ENCODE measurements at regions of chr21 and their contacts with region 1.

Region 1: GRCh38 chr21:38819714-38820183 is 14.0 kb downstream of the ETS2 start:
- DNase-seq: peak; percentile 77
- ATAC-seq: peak; percentile 67
- H3K4me3 ChIP-seq: no peak overlapping the region
- H3K27ac ChIP-seq: peak overlapping the region; percentile 22
- H3K4me1 ChIP-seq: peaks cover 32% of the 10 kb centered on the region
- H3K27me3 ChIP-seq: no peaks in the 10 kb centered on the region
- CTCF ChIP-seq: no peak
- POLR2A ChIP-seq: no peak
- RAD21 ChIP-seq: no peak

Region 2: GRCh38 chr21:38310619-38311018 is 509.1 kb before region 1 on chr21:
- CTCF ChIA-PET with region 1: no interaction called
- POLR2A ChIA-PET with region 1: no interaction called
- dilution Hi-C with region 1: no loop called
- in situ Hi-C with region 1: no loop called
- intact Hi-C with region 1: no loop called
- DNase-seq: peak; percentile 49
- ATAC-seq: no peak
- H3K4me3 ChIP-seq: no peak overlapping the region
- H3K27ac ChIP-seq: no peak overlapping the region
- H3K4me1 ChIP-seq: peaks cover 8% of the 10 kb centered on the region
- H3K27me3 ChIP-seq: peaks cover 2% of the 10 kb centered on the region; the same call in 1 of the 2 replicates
- CTCF ChIP-seq: no peak
- POLR2A ChIP-seq: no peak
- RAD21 ChIP-seq: no peak

Region 3: DNA sequence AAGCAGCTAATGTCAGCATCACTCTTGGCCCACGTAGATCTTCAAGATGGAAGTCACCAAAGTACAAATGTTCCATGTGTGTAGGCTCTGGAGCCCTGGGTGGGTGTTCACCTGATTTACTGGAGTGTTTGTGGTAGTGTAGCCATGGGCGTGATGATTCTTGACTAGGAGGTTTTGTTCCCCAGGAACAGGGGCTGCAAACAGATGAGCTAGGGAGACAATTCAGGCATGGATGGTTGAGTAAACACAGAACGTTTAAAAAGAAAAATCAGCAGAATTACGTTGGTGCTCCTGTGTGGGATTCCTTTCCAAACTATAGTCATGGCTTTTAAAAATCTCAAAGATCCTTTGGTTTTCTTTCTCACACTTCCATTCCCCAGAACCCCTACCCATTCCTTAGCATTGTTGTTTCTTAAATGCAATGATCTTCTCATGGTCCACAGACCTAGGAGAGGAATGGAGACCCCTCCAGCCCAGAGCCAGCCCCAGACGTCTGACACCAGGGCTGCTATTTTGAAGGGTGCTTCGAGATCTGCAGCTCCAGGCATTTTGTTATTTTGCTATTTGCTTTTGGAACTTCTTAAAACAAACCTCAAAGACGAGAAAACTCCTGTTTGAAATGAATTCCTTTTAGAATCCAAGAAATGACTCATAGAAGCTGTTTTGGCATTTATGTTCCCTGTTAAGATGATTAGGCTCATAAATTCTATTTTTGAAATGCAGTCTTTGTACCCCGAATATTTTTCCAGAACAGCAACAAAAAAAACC is 101.1 kb after region 1 on chr21:
- CTCF ChIA-PET with region 1: no interaction called
- POLR2A ChIA-PET with region 1: no interaction called
- dilution Hi-C with region 1: no loop called
- in situ Hi-C with region 1: no loop called
- intact Hi-C with region 1: loop called (anchors 5 kb)
- DNase-seq: peak; percentile 72
- ATAC-seq: peak; percentile 62
- H3K4me3 ChIP-seq: peak overlapping the region; percentile 7; the same call in 1 of the 2 replicates
- H3K27ac ChIP-seq: peak overlapping the region; percentile 67; the same call in 1 of the 2 replicates
- H3K4me1 ChIP-seq: peaks cover 9% of the 10 kb centered on the region
- H3K27me3 ChIP-seq: no peaks in the 10 kb centered on the region
- CTCF ChIP-seq: no peak
- POLR2A ChIP-seq: no peak
- RAD21 ChIP-seq: no peak

Region 4: DNA sequence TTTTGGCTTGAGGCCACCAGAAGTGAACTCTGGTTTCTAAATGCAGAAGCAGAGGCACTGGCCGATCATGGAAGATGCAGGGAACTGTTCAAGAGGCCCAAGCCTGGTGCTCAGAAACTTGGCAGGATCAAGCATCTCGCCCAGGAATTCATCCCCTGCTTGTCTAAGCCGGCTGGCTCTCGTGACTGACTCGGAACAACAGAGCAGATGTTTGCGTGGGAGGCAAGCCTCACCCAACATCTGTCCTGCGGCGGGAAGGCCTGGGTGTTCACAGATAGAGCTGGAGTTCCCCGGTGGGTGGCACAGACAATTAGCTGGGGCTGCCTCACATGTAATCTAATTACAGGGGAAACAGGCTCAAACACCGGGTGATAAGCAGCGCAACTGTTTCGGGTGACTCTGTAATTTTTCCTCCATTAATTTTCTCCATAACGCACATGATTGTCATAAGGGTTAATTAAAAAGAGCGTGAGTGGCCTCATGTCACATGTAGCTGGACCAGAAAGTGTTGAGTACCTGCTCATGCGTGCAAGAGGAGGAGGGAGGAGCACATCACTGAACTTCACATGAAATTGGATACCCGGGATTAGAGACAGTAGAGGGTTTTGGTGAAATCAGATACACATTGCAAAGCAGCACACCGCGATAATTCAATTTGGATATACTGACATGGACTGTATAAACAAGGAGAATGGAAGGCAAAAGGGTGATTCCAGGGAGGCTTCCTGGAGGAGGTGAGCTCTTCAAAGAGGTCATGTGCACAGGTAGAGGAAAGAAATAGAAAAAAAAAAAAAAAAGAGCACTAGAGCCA is 166.0 kb after region 1 on chr21:
- CTCF ChIA-PET with region 1: no interaction called
- POLR2A ChIA-PET with region 1: no interaction called
- dilution Hi-C with region 1: no loop called
- in situ Hi-C with region 1: no loop called
- intact Hi-C with region 1: loop called (anchors 5 kb)
- DNase-seq: peak; percentile 93
- ATAC-seq: peak; percentile 73
- H3K4me3 ChIP-seq: no peak overlapping the region
- H3K27ac ChIP-seq: peak overlapping the region; percentile 78
- H3K4me1 ChIP-seq: peaks cover 34% of the 10 kb centered on the region
- H3K27me3 ChIP-seq: no peaks in the 10 kb centered on the region
- CTCF ChIP-seq: no peak
- POLR2A ChIP-seq: no peak
- RAD21 ChIP-seq: no peak

Region 5: DNA sequence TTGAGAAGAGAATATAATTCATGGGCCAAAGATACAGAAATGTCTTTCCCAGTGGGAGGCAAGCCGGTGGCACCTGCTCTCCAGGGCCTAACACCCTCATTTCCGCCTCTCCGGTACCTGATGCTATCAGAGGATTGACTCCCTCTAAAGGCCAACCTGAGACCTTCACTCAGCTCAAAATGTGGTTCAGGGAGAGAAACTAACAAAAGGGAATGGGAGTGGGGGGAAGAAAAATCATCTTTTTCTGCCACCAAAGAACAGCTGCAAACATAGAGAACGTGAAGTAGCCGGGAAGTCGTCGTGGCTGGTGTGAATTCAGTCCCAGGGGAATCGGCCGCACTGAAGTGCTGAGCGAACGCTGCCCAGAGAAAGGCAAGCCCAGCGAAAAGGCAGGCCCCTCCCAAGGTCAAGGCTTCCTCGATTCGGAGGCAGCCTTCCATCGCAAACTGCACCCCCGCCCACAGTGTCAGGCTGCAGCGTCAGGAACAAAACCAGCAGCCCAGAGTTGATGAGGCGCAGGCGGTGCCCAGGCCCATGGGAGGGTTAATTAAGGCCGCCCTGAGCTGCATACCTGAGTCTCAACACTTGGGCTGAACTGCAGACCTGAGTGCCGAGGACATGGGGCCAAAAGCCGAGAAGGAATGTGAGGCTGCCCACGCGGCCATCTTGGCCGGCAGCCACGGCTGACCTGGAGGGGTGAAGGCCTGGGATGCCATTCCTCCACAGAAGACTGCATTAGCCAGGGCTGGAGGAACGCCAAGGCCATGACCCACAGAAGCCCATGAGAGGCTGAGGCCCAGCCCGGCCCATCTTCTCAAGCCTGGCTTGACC is 203.3 kb after region 1 on chr21:
- CTCF ChIA-PET with region 1: no interaction called
- POLR2A ChIA-PET with region 1: no interaction called
- dilution Hi-C with region 1: no loop called
- in situ Hi-C with region 1: no loop called
- intact Hi-C with region 1: loop called (anchors 5 kb)
- DNase-seq: peak; percentile 28
- ATAC-seq: no peak; the same call in 1 of the 2 replicates
- H3K4me3 ChIP-seq: no peak overlapping the region
- H3K27ac ChIP-seq: peak overlapping the region; percentile 20
- H3K4me1 ChIP-seq: peaks cover 31% of the 10 kb centered on the region
- H3K27me3 ChIP-seq: no peaks in the 10 kb centered on the region
- CTCF ChIP-seq: no peak
- POLR2A ChIP-seq: no peak
- RAD21 ChIP-seq: no peak

Region 6: DNA sequence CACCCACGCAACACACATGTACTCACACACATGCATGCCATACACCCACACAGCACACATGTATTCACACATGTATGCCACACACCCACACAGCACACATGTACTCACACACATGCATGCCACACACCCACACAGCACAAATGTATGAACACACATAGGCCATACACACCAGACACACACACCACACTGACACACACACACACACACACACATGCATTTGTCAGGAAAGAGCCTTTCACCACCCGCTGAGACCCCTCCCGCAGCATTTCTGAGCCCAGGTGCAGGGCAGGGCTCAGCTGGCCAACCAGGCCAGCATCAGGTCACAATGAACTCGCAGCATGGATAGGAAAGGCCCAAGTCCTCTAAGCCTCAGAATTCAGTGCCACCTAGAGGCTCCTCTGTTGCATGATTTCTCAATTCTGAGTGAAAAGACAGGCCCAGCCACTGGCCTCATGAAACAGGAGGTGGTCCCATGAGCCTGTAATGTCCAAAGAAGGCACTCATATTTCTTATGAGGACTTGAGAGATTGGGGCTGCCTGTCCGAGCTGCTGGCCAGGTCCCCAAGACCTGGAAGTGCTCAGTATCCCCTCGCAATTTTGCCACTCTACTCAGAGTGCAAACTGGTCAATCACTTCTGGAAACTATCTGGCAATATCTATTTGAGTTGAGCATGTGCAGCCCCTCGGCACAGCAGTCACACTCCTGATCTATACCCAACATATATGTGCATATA is 306.2 kb after region 1 on chr21:
- CTCF ChIA-PET with region 1: no interaction called
- POLR2A ChIA-PET with region 1: no interaction called
- dilution Hi-C with region 1: no loop called
- in situ Hi-C with region 1: no loop called
- intact Hi-C with region 1: loop called (anchors 5 kb)
- DNase-seq: peak; percentile 78
- ATAC-seq: peak; percentile 98
- H3K4me3 ChIP-seq: no peak overlapping the region
- H3K27ac ChIP-seq: peak overlapping the region; percentile 14; the same call in 1 of the 2 replicates
- H3K4me1 ChIP-seq: peaks cover 4% of the 10 kb centered on the region; the same call in 1 of the 2 replicates
- H3K27me3 ChIP-seq: no peaks in the 10 kb centered on the region; the same call in 1 of the 2 replicates
- CTCF ChIP-seq: peak; percentile 78
- POLR2A ChIP-seq: 0 out of 2 replicates have a peak, but pooled peaks have one; percentile 33
- RAD21 ChIP-seq: peak; percentile 91